Heart left ventricle (tissue), 16 donors: ENCODE measurements at regions of chr9 and their contacts with region 1.

Region 1: DNA sequence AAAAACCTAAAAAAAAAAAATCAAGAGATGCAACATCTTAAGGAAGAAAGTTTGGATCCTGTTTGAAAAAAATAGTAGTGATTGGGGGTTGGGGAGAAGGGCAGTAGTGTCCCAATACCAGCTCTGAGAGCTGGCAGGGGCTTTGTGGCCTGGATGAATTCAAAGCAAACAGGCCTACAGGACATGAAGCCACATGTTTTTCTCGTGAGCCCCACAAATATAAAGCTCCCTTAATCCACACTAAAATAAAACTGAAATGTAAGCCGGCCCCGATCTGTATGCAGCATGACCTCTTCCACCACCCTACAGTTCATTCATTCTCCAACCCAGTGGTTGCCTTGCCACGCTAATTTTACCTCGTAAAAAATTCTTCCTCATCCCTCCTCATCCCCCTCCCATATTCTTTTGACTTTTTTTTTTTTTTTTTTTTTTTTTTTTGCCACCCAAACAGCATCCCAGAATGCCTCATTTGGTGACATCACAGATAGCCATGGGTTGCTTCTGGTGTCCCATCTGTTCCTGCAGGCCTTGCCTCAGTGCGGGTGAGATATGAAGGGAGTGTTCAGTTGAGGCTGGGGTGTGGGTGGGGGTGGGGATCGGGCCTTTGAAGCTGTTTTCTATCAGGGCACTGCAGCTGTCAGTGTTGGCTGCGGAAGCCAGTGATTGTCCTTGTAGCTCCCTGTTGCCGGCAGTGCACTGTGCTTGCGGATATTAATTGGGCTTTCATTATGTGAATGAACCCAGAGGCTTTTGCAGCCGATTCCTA is 81.6 kb upstream of the NFIB start:
- DNase-seq: peak; percentile 43 to 59 (median 54)
- ATAC-seq: peak; percentile 75 to 86 (median 78)
- H3K4me3 ChIP-seq: peak overlapping the region in 7 of 12 donors; percentile 9 to 38 (median 20)
- H3K27ac ChIP-seq: peak overlapping the region in 8 of 12 donors; percentile 30 to 68 (median 58)
- H3K4me1 ChIP-seq: peaks cover 0 to 14% (median 6%) of the 10 kb centered on the region in 12 donors
- H3K27me3 ChIP-seq: no peaks in the 10 kb centered on the region
- CTCF ChIP-seq: no peak
- POLR2A ChIP-seq: no peak

Region 2: GRCh38 chr9:14322211-14323082 is 73.1 kb before region 1 on chr9:
- intact Hi-C with region 1: loop called in 1 of 10 experiments (anchors 5 kb)
- DNase-seq: peak; percentile 94 to 96 (median 95)
- ATAC-seq: peak; percentile 86 to 96 (median 92)
- H3K4me3 ChIP-seq: peak overlapping the region; percentile 65 to 84 (median 78)
- H3K27ac ChIP-seq: peak overlapping the region; percentile 93 to 100 (median 98)
- H3K4me1 ChIP-seq: peaks cover 8 to 82% (median 44%) of the 10 kb centered on the region in 12 donors
- H3K27me3 ChIP-seq: peaks cover 0 to 6% (median 0%) of the 10 kb centered on the region in 9 donors
- CTCF ChIP-seq: peak; percentile 17 to 75 (median 60)
- POLR2A ChIP-seq: peak in 1 of 2 donors; percentile 55

Region 3: DNA sequence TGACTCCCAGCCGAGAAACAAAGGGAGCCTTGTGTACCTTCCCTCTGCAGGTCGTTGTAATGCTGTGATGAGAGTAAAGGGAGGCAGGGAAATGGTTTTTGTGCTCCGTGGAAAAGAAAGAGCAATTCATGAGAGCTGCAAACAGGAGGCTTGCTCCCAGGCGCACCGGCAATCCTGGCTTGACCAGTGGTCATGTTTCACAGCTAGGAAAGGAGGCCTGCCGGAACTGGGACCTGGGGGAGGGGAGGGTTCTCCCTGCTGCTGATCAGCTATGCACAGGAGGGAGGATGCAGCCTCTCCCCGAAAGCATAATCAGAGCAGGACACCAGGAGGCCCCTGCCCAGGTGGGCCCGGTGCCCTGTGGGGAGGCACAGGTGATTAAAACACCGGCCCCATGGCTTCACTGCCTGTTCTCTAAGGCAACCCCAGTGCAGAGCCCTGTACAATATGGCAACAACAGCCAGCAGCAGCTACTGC is 166.5 kb after region 1 on chr9:
- intact Hi-C with region 1: no loop called
- DNase-seq: no peak
- ATAC-seq: no peak
- H3K4me3 ChIP-seq: no peak overlapping the region
- H3K27ac ChIP-seq: no peak overlapping the region
- H3K4me1 ChIP-seq: no peaks in the 10 kb centered on the region
- H3K27me3 ChIP-seq: no peaks in the 10 kb centered on the region
- CTCF ChIP-seq: no peak
- POLR2A ChIP-seq: no peak